Aorta (tissue), 5 donors: ENCODE measurements at regions of chr3 and their contacts with region 1.

Region 1: GRCh38 chr3:65732051-65732935 is 306.4 kb downstream of the MAGI1 start:
- DNase-seq: no peak
- ATAC-seq: peak; percentile 77
- H3K4me3 ChIP-seq: no peak overlapping the region
- H3K27ac ChIP-seq: no peak overlapping the region
- H3K4me1 ChIP-seq: no peaks in the 10 kb centered on the region
- H3K27me3 ChIP-seq: no peaks in the 10 kb centered on the region

Region 2: DNA sequence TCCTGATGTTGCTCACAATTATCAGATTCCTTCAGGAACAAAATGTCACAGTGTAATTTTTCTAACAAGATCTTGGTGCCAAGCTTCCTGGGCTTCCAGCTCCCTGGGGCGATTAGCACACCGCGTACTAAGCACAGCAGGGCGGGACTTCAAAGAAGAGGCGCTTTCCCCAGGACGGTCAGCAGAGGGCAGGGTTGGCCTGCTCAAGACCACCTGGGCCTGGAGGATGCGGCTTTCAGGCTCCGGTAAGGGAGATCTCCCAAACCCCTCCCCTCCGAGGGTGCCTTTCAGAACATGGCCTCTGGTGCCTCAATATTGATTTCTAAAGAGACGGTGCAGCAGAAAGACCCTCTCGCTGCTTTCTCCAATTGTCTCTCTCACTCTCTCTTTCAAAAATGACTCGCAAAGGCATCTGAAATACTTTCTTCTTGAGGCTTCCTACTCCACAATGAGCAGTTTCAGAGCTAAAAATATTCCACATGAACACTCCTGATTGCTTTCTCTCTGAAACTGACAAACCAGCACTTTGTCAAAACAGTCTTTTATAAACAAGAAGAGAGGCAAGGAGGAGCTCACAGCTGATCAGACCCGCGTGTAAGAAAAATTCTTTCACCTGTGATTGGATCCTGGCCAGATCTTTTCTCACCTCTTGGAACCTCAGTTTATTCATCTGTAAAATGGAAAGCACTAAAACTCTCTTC is 1198.5 kb before region 1 on chr3:
- intact Hi-C with region 1: loop called in 1 of 2 experiments (anchors 10 kb)
- DNase-seq: peak; percentile 82 to 92
- ATAC-seq: peak; percentile 93
- H3K4me3 ChIP-seq: peak overlapping the region in 1 of 2 donors; percentile 8
- H3K27ac ChIP-seq: no peak overlapping the region
- H3K4me1 ChIP-seq: no peaks in the 10 kb centered on the region
- H3K27me3 ChIP-seq: no peaks in the 10 kb centered on the region

Region 3: GRCh38 chr3:65619451-65619881 is 112.8 kb before region 1 on chr3:
- intact Hi-C with region 1: loop called in 1 of 2 experiments (anchors 5 kb)
- DNase-seq: no peak
- ATAC-seq: peak; percentile 26
- H3K4me3 ChIP-seq: no peak overlapping the region
- H3K27ac ChIP-seq: no peak overlapping the region
- H3K4me1 ChIP-seq: peaks cover 0 to 6% of the 10 kb centered on the region in 2 donors
- H3K27me3 ChIP-seq: no peaks in the 10 kb centered on the region